H1 (cell line): ENCODE measurements at regions of chr11 and their contacts with region 1.

Region 1: GRCh38 chr11:3109921-3110706 is 52.9 kb upstream of the CARS1 start:
- DNase-seq: peak; percentile 43 to 86
- H3K4me3 ChIP-seq: no peak overlapping the region
- H3K27ac ChIP-seq: no peak overlapping the region
- H3K4me1 ChIP-seq: peaks cover 0 to 16% (median 8%) of the 10 kb centered on the region in 4 experiments; a peak in 5 of 7 replicates
- H3K27me3 ChIP-seq: no peaks in the 10 kb centered on the region; a peak in 2 of 7 replicates
- CTCF ChIP-seq: peak; percentile 90 to 96 (median 93)
- EP300 ChIP-seq: no peak
- POLR2A ChIP-seq: no peak
- RAD21 ChIP-seq: peak; percentile 77 to 86

Region 2: GRCh38 chr11:3120071-3120792 is 10.1 kb after region 1 on chr11:
- CTCF ChIA-PET with region 1: interaction called, 24 read pairs
- POLR2A ChIA-PET with region 1: interaction called, 4 read pairs
- DNase-seq: no peak
- H3K4me3 ChIP-seq: no peak overlapping the region
- H3K27ac ChIP-seq: no peak overlapping the region
- H3K4me1 ChIP-seq: no peaks in the 10 kb centered on the region; a peak in 1 of 7 replicates
- H3K27me3 ChIP-seq: no peaks in the 10 kb centered on the region
- CTCF ChIP-seq: no peak
- EP300 ChIP-seq: no peak
- POLR2A ChIP-seq: no peak
- RAD21 ChIP-seq: no peak

Region 3: DNA sequence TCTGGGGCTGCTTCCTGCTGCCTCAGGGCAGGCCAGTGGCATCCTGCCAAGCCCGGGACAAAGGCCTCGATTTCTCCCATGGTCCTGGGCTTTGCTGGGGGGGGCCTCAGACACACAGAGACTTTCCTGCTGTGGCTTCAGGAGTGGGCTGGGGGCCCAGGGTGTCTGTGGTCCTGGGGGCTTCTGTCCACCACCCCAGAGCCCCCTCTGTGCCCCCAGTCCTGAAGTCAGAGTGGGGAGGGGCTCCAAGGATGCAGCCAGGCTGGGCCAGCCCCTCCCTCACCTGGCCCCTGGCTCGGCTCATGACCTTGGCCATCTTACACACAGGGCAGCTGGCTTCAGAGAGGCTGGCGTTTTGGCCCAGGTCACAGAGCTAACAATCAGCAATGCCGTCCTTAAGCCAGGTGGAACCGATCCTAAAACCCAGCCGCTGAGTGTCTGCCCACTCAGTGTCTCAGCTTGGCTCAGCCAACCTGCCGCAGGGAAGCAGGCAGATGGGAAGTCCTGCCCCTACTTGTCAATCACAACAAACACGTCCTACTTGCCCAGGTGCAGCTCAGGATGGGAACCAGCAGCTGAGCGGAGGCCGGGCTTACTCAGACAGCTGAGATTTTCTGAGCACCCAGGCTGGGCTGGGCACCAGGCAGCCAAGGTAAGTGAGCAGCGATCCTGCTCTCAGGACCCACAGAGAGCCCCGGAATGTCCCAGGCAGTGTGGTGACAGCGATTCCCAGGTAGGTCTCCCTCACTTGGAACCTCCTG is 20.4 kb after region 1 on chr11:
- CTCF ChIA-PET with region 1: interaction called, 36 read pairs
- POLR2A ChIA-PET with region 1: no interaction called
- DNase-seq: no peak
- H3K4me3 ChIP-seq: no peak overlapping the region
- H3K27ac ChIP-seq: no peak overlapping the region
- H3K4me1 ChIP-seq: peaks cover 0 to 5% (median under 1%) of the 10 kb centered on the region in 4 experiments; a peak in 2 of 7 replicates
- H3K27me3 ChIP-seq: no peaks in the 10 kb centered on the region; a peak in 1 of 7 replicates
- CTCF ChIP-seq: no peak
- EP300 ChIP-seq: no peak
- POLR2A ChIP-seq: no peak
- RAD21 ChIP-seq: no peak

Region 4: GRCh38 chr11:3135481-3136440 is 25.6 kb after region 1 on chr11:
- CTCF ChIA-PET with region 1: interaction called, 36 read pairs
- POLR2A ChIA-PET with region 1: no interaction called
- DNase-seq: no peak
- H3K4me3 ChIP-seq: no peak overlapping the region
- H3K27ac ChIP-seq: no peak overlapping the region
- H3K4me1 ChIP-seq: peaks cover 0 to 9% (median 5%) of the 10 kb centered on the region in 4 experiments; a peak in 4 of 7 replicates
- H3K27me3 ChIP-seq: no peaks in the 10 kb centered on the region
- CTCF ChIP-seq: peak in 2 of 3 experiments; percentile 63 to 70; a peak in 3 of 4 replicates
- EP300 ChIP-seq: no peak
- POLR2A ChIP-seq: no peak
- RAD21 ChIP-seq: peak; percentile 46 to 68

Region 5: GRCh38 chr11:3195251-3196160 is 85.4 kb after region 1 on chr11:
- CTCF ChIA-PET with region 1: interaction called, 16 read pairs
- POLR2A ChIA-PET with region 1: no interaction called
- DNase-seq: peak in 1 of 2 experiments; percentile 47
- H3K4me3 ChIP-seq: no peak overlapping the region
- H3K27ac ChIP-seq: no peak overlapping the region
- H3K4me1 ChIP-seq: peaks cover 0 to 9% (median 3%) of the 10 kb centered on the region in 4 experiments; a peak in 4 of 7 replicates
- H3K27me3 ChIP-seq: no peaks in the 10 kb centered on the region; a peak in 1 of 7 replicates
- CTCF ChIP-seq: peak in 2 of 3 experiments; percentile 24 to 27; a peak in 1 of 4 replicates
- EP300 ChIP-seq: no peak
- POLR2A ChIP-seq: no peak
- RAD21 ChIP-seq: peak; percentile 15 to 47; a peak in 2 of 4 replicates

Region 6: DNA sequence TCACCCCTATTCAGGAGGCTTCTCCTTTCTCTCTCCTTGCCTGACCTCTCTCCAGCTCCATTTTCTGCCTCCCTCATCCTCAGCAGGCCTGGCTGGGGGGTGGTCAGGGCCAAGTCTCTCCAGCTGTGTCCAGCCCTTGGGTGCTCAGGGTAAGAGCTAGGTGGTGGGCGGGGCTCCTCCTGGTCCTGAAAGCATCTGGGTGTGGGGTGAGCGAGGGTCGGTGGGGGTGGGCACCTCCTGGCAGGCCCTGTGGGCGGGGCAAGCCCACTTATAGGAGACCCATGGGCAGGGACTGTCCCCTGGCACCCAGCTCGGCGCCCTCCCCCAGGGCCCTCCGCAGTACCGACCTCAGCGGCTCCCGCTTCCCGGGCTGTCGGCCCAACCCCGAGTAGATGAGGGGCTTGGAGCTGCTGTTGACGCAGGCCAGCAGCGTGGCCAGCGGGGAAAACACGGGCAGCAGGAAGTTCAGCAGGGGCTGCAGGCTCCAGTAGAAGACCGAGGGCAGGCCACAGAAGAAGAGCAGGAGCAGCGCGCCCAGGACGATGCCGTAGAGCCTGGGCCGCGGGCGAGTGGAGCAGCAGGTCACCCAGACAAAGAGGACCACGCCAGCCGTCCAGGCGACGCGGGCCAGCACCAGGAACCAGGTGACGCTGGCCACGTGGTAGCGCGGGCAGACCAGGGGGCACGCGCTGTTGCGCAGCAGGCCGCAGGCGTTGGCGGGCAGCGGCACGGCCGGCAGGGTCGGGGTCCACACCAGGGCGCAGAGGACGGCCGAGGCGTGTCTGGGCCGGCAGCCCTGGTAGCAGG is 107.8 kb after region 1 on chr11:
- CTCF ChIA-PET with region 1: interaction called, 20 read pairs
- POLR2A ChIA-PET with region 1: no interaction called
- DNase-seq: peak in 1 of 2 experiments; percentile 49
- H3K4me3 ChIP-seq: no peak overlapping the region
- H3K27ac ChIP-seq: no peak overlapping the region
- H3K4me1 ChIP-seq: peaks cover 0 to 12% (median 4%) of the 10 kb centered on the region in 4 experiments; a peak in 3 of 7 replicates
- H3K27me3 ChIP-seq: no peaks in the 10 kb centered on the region
- CTCF ChIP-seq: no peak
- EP300 ChIP-seq: no peak
- POLR2A ChIP-seq: no peak
- RAD21 ChIP-seq: no peak

Region 7: GRCh38 chr11:3222941-3223915 is 113.1 kb after region 1 on chr11:
- CTCF ChIA-PET with region 1: interaction called, 15 read pairs
- POLR2A ChIA-PET with region 1: no interaction called
- DNase-seq: no peak
- H3K4me3 ChIP-seq: no peak overlapping the region
- H3K27ac ChIP-seq: no peak overlapping the region
- H3K4me1 ChIP-seq: peaks cover 0 to 23% (median 10%) of the 10 kb centered on the region in 4 experiments; a peak in 6 of 7 replicates
- H3K27me3 ChIP-seq: no peaks in the 10 kb centered on the region
- CTCF ChIP-seq: no peak
- EP300 ChIP-seq: no peak
- POLR2A ChIP-seq: no peak
- RAD21 ChIP-seq: no peak